Dorsolateral prefrontal cortex (tissue), 120 donors: ENCODE measurements at regions of chr6 and their contacts with region 1.

Region 1: DNA sequence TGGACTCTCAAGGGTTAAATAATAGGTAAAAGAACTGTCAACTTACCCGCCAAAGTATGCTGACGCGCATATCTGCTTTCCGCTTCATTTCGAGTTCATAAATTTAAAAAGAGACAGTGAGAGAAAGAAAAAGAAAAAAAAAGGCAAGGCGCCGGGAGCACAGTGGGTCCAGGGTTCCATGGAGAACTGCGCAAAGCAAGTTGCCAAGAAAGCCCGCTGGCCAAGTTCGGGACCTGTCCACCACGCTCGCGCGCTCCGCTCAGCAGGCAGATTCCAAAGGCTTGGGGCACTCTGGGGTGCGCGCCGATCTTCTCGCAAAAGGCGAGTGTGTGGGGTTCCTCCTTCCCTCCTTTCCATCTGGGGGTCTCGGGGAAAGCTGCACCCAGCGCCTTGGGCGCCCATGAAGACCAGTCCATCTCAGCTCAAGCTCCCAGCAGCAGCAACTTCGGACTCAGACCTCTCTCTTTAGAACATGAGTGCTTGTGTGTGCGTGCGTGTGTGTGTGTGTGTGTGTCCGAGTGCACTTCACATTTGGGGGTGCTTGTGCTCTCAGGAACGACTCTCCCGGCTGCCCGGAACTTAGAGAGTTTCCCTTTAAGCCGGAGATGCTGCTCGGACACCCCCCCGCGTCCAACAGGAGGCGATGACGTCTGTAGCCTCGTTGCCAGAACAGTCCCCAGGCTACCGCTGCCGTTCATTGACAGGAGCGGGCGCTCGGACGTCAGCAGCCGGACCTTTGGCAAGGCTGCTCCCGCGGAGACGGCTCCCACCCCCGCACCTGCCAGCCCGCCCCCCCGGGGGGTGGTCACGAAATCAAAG is 180.0 kb downstream of the TBXT start:
- DNase-seq: peak; percentile 49 to 92 (median 85)
- H3K4me3 ChIP-seq: peak overlapping the region; percentile 31 to 75 (median 61)
- H3K27ac ChIP-seq: peak overlapping the region in 50 of 59 donors; percentile 2 to 89 (median 73)
- H3K27me3 ChIP-seq: peaks cover 0 to 49% (median 8%) of the 10 kb centered on the region in 45 donors
- CTCF ChIP-seq: no peak

Region 2: DNA sequence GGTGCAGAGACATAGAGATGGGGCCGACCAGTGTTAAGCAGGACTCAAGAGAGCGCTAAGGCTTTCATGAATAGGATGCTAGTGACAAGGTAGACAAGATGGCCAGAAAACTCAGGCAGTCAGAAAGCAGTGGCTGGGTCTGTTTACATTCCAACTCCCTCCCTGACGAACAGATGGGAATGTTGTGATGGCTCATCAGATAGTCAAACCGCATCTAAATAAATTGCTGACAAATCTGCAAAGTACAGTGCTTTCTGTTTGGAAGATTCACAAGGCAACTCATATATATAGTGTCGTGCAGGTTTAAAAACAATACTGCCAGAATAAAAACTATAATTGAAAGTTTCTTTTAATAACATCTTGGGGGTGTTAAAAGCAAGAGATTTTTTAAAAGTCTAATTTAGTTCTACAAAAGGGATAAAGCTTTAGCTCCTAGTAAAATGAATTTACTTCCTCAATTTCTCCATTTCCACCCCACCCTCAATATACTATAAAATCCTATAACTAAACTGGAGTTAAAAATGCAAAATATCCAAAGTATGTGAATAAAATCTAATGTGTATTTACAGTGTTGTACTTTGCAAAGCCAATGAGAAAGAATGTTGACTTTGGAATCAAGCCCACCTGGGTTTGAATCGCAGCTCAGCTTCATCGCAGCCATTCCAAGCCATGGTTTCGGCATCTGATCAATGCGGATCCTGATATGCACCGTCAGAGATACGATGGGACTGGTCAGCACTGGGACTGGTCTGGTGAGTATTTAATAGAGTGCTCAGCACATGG is 77.3 kb before region 1 on chr6:
- intact Hi-C with region 1: loop called in 1 of 2 experiments (anchors 10 kb)
- DNase-seq: no peak
- H3K4me3 ChIP-seq: no peak overlapping the region
- H3K27ac ChIP-seq: peak overlapping the region in 7 of 59 donors; percentile 6 to 42 (median 30)
- H3K27me3 ChIP-seq: peaks cover 0 to 3% (median 0%) of the 10 kb centered on the region in 45 donors
- CTCF ChIP-seq: no peak

Region 3: DNA sequence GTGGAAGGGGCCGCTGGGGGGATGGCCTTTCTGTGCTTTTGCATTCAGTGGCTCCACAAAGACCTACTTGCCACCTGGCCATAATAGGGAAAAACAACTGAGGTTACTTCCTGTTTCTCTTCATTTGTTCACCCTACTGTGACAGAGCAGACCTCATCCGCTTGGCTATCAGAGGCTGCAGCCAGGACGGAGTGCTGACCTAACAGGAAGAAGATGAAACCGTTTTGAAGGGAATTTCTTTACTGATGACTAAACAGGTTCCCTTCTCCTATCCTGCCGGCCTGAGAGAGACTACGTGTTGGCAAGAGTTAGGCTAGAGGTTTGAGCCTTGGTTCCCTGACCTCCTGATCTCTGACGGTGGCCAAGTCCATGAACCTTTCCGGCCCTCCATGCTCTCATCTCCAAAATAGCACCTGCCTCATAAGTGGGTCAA is 299.2 kb after region 1 on chr6:
- intact Hi-C with region 1: no loop called
- DNase-seq: no peak
- H3K4me3 ChIP-seq: no peak overlapping the region
- H3K27ac ChIP-seq: peak overlapping the region in 16 of 59 donors; percentile 0 to 53 (median 34)
- H3K27me3 ChIP-seq: no peaks in the 10 kb centered on the region
- CTCF ChIP-seq: no peak